ENCODE measurements at regions of chr4 and their contacts with region 1.

Region 1: DNA sequence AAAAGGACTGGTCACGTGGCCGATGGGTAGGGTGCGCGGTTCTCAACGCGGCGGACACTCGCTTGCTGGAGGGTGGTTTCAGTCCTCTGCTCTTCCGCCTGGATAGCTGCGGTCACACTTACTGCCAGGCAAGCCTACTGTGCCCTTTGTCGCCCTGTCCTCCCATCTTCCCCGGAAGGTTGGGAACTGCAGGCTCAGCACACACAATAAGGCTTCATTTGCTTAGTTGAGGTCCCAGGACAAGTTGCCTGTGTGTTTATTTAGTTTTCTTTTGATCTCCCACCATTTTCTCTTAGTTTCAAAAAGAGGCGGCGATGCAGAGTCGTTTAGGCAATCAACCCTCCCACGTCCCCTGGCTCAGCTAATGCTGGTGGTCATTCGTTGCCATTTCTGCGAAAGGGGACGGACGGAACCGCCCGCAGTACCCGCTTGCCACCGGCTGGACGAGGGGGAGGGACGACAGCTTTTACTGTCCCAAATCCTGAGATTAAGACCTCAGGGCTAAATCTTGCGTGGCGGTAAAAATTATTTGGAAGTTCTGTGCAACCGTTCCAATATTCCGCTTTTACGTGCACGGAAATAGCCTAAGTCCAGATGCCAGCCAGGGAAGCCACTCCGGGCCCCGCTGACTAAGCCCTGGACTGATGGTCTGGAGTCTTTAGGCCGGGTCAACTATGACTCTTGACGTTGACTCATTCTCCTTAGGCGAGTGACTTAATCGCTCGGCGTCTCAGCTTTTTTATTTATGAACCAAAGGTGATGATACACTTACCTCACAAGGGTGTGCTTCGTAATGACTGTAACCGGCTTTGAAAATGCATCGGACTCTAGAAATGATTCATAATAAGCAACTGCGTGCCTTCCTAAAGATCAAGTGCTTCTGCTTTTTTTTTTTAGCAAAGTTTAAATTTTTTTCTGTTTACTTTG is 671 bp upstream of the EIF4E start:
- DNase-seq: peak; percentile 15 to 51
- H3K4me3 ChIP-seq: peak overlapping the region; percentile 44 to 93 (median 61)
- H3K27ac ChIP-seq: peak overlapping the region; percentile 73 to 98 (median 96)
- H3K4me1 ChIP-seq: peaks cover 4 to 10% of the 10 kb centered on the region in 2 donors
- H3K27me3 ChIP-seq: no peaks in the 10 kb centered on the region
- CTCF ChIP-seq: peak in 3 of 6 experiments; percentile 25 to 37 (median 33)
- POLR2A ChIP-seq: no peak

Region 2: GRCh38 chr4:98467627-98468072 is 462.0 kb before region 1 on chr4:
- intact Hi-C with region 1: loop called (anchors 10 kb)
- DNase-seq: peak; percentile 81 to 86
- H3K4me3 ChIP-seq: peak overlapping the region in 2 of 3 donors; percentile 0 to 20
- H3K27ac ChIP-seq: peak overlapping the region in 2 of 3 donors; percentile 46 to 66
- H3K4me1 ChIP-seq: peaks cover 11 to 18% of the 10 kb centered on the region in 2 donors
- H3K27me3 ChIP-seq: no peaks in the 10 kb centered on the region
- CTCF ChIP-seq: peak; percentile 43 to 88 (median 72)
- POLR2A ChIP-seq: no peak

Region 3: GRCh38 chr4:99473131-99473530 is 543.5 kb after region 1 on chr4:
- intact Hi-C with region 1: no loop called
- DNase-seq: no peak
- H3K4me3 ChIP-seq: no peak overlapping the region
- H3K27ac ChIP-seq: no peak overlapping the region
- H3K4me1 ChIP-seq: no peaks in the 10 kb centered on the region
- H3K27me3 ChIP-seq: no peaks in the 10 kb centered on the region
- CTCF ChIP-seq: no peak
- POLR2A ChIP-seq: no peak

Measured in thyroid gland (tissue), 4 donors.